ENCODE measurements at regions of chr10 and their contacts with region 1.

Region 1: GRCh38 chr10:70272925-70273316 is 10.9 kb downstream of the NPFFR1 start:
- DNase-seq: no peak
- ATAC-seq: peak; percentile 16 to 57 (median 34)
- H3K4me3 ChIP-seq: no peak overlapping the region
- H3K27ac ChIP-seq: no peak overlapping the region
- H3K4me1 ChIP-seq: peaks cover 0 to 20% (median 4%) of the 10 kb centered on the region in 9 donors
- H3K27me3 ChIP-seq: no peaks in the 10 kb centered on the region
- CTCF ChIP-seq: peak; percentile 25 to 68 (median 54)

Region 2: DNA sequence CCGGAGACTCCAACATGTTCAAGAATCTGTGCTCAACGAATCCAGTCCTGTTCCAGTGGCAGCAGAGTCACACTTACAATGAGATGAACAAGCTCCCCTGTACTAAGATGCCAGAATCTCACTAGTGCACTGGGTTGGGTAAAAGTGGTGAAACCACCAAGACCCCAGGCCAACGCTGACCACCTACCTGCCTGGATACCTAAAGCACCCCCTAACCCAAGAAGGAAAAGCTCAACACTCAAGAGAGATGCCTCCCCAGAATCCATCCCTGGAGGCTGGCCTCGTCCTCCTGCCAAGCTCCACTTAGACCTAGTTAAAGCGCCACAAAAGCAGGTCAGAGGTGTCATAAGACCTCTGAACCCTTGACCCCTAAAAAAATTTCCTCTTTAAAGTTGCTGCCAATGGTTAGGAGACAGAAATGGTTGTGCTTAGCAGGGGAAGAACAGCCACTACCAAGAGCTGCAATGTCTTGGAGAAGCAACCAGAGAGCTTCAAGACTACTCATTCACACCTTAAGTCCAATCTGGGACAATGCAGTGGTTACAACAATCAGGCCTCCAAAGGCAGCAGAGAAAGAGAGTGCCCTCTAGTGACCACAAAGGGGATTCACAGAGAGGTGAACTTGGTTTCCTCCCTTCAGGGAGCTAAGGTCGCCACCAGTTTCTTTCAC is 314.9 kb before region 1 on chr10:
- intact Hi-C with region 1: no loop called
- DNase-seq: no peak
- ATAC-seq: no peak
- H3K4me3 ChIP-seq: no peak overlapping the region
- H3K27ac ChIP-seq: no peak overlapping the region
- H3K4me1 ChIP-seq: peaks cover 0 to 31% (median 7%) of the 10 kb centered on the region in 9 donors
- H3K27me3 ChIP-seq: no peaks in the 10 kb centered on the region
- CTCF ChIP-seq: peak; percentile 34 to 82 (median 71)

Region 3: DNA sequence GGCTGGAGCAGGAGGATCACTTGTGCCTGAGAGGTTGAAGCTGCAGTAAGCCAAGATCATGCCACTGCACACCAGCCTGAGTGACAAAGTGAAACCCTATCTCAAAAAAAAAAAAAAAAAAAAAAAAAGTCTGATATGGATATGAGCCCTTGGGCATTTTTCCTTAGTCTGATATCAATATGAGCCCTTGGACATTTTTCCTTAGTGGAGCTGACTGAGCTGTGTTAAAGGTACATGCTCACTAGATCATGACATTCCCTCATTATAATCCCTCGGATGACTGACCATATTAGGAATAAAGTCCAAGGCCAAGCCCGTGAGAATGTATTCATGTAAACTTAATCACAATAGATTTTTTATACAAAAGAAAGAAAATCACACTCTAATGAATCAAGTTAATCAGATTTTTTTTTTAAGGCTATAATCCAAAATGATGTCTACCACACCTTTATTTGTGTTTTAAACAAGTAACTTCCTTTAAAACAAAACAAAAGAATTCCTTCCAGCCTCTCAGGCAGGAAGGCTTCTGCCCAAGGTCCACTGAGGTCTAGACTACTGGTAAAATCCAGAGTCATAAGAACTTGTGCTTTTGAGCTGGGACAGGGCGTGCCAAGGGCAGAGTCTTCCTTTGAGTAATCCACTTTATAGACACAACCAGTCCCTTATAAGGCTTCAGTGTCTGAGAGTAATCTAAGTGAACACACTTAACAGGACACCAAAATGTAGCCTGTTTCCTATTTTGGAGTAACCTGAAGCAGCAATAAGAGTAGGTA is 45.2 kb before region 1 on chr10:
- intact Hi-C with region 1: loop called in 3 of 10 experiments (anchors 5 to 10 kb)
- DNase-seq: no peak
- ATAC-seq: peak in 4 of 8 donors; percentile 29 to 56 (median 42)
- H3K4me3 ChIP-seq: no peak overlapping the region
- H3K27ac ChIP-seq: peak overlapping the region in 4 of 10 donors; percentile 10 to 37 (median 20)
- H3K4me1 ChIP-seq: peaks cover 0 to 53% (median 32%) of the 10 kb centered on the region in 9 donors
- H3K27me3 ChIP-seq: no peaks in the 10 kb centered on the region
- CTCF ChIP-seq: no peak

Region 4: DNA sequence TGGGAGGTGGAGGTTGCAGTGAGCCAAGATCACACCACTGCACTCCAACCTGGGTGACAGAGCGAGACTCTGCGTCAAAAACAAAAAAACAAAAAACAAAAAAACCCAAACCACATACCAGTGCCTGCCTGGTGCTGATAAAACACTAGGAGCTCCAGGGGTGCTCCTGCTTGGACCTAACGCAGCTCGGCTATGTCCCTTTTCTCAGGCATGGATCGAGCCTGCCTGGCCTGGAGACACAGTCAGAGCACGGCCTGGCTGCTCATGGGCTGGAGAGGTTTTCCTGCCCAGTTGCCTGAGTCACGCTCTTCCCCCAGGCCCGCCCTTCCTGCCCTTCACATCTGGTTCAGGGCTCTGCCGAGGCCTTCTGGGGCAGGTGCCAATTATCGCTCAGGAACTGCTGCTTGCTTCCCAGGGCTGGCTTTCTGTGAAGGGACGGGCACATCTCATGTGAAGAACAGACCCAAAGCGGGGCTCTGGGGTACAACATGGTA is 23.5 kb after region 1 on chr10:
- intact Hi-C with region 1: loop called in 1 of 10 experiments (anchors 1 kb)
- DNase-seq: peak; percentile 88 to 91
- ATAC-seq: peak; percentile 97 to 100 (median 99)
- H3K4me3 ChIP-seq: no peak overlapping the region
- H3K27ac ChIP-seq: peak overlapping the region; percentile 53 to 92 (median 85)
- H3K4me1 ChIP-seq: peaks cover 11 to 23% (median 21%) of the 10 kb centered on the region in 9 donors
- H3K27me3 ChIP-seq: no peaks in the 10 kb centered on the region
- CTCF ChIP-seq: no peak

Region 5: GRCh38 chr10:70348228-70348850 is 75.4 kb after region 1 on chr10:
- intact Hi-C with region 1: loop called in 4 of 10 experiments (anchors 1 to 5 kb)
- DNase-seq: peak; percentile 23 to 40
- ATAC-seq: peak in 7 of 8 donors; percentile 42 to 70 (median 53)
- H3K4me3 ChIP-seq: no peak overlapping the region
- H3K27ac ChIP-seq: no peak overlapping the region
- H3K4me1 ChIP-seq: peaks cover 0 to 27% (median 10%) of the 10 kb centered on the region in 9 donors
- H3K27me3 ChIP-seq: peaks cover 0 to 6% (median 0%) of the 10 kb centered on the region in 7 donors
- CTCF ChIP-seq: peak in 7 of 9 donors; percentile 54 to 65 (median 60)

Region 6: GRCh38 chr10:70363971-70364771 is 91.2 kb after region 1 on chr10:
- intact Hi-C with region 1: loop called in 9 of 10 experiments (anchors 2 to 5 kb)
- DNase-seq: peak; percentile 88
- ATAC-seq: peak; percentile 95 to 99 (median 97)
- H3K4me3 ChIP-seq: peak overlapping the region in 2 of 10 donors; percentile 16 to 22
- H3K27ac ChIP-seq: peak overlapping the region; percentile 13 to 81 (median 74)
- H3K4me1 ChIP-seq: peaks cover 9 to 19% (median 16%) of the 10 kb centered on the region in 9 donors
- H3K27me3 ChIP-seq: no peaks in the 10 kb centered on the region
- CTCF ChIP-seq: peak; percentile 91 to 97 (median 96)

Region 7: DNA sequence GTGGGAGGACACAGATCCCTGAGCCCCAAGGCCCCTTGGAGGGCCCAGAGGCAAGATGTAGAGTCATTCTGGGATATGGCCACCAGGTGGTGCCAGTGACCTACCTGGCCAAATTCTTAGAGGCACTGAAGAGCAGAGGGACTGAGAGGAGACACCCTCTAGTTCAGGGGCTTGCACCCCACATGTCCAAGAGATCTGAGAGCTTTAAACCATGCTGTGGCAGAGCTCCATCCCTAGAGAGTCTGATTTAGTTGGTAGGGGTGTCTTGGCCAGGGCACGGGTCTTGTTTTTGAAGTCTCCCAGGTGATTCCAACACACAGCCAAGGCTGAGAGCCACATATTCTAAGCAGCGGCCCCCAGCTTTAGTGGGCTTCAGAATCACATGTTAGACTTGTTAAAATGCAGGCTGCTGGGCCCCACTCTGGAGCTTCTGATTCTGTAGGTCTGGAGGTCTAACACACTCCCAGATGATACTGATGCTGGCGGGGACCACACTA is 277.1 kb after region 1 on chr10:
- intact Hi-C with region 1: loop called in 1 of 10 experiments (anchors 5 kb)
- DNase-seq: peak; percentile 62 to 67
- ATAC-seq: peak; percentile 58 to 78 (median 70)
- H3K4me3 ChIP-seq: no peak overlapping the region
- H3K27ac ChIP-seq: no peak overlapping the region
- H3K4me1 ChIP-seq: peaks cover 0 to 24% (median 0%) of the 10 kb centered on the region in 9 donors
- H3K27me3 ChIP-seq: no peaks in the 10 kb centered on the region
- CTCF ChIP-seq: peak; percentile 85 to 97 (median 90)